HEK293 (cell line): ENCODE measurements at regions of chr12 and their contacts with region 1.

Region 1: GRCh38 chr12:102811110-102811737 is 105.8 kb downstream of the PAH start:
- H3K4me3 ChIP-seq: no peak overlapping the region
- H3K27ac ChIP-seq: no peak overlapping the region
- H3K4me1 ChIP-seq: no peaks in the 10 kb centered on the region
- CTCF ChIP-seq: no peak

Region 2: GRCh38 chr12:101939856-101940265 is 871.4 kb before region 1 on chr12:
- CTCF ChIA-PET with region 1: interaction called, 12 read pairs
- POLR2A ChIA-PET with region 1: no interaction called
- H3K4me3 ChIP-seq: no peak overlapping the region
- H3K27ac ChIP-seq: no peak overlapping the region
- H3K4me1 ChIP-seq: peaks cover 2% of the 10 kb centered on the region
- CTCF ChIP-seq: peak; percentile 72

Region 3: GRCh38 chr12:102722147-102722546 is 89.1 kb before region 1 on chr12:
- CTCF ChIA-PET with region 1: no interaction called
- POLR2A ChIA-PET with region 1: no interaction called
- H3K4me3 ChIP-seq: no peak overlapping the region
- H3K27ac ChIP-seq: no peak overlapping the region
- H3K4me1 ChIP-seq: no peaks in the 10 kb centered on the region
- CTCF ChIP-seq: no peak

Region 4: DNA sequence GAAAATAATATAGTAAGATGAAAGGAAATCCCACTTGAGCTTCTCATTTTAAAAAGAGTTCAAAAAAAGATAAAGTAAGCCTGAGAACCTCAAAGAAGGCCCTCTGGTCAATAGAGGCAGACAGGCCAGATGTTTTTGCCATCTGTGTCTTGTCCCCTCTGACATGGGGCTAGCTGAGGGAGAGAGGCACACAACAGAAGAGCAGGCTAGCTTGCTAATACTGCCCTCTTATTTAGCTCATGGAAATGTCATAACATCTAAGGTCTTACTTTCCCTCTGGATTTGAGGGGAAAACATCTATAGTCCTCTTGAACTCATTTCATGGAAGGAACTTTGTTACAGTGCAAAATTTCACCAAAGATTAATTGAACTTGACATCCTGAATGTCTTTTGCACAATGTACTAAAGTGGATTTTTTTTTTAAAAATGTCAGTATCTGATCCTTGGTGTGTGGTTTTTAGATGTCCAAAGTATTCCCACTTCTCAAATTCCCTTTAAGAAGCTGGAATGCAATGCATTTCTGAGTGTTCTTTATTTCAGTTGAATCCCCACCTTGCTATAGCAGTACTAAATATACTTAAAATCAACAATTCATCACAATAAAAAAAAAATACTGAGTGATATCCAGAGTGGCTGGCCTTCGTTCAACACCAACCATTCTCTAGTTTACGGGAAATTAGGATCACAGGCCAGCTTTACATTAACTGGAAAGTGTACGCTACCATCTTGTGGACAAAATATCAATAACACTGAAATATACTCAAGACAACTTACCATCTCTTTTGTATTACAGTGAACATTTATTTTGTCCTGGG is 70.9 kb before region 1 on chr12:
- CTCF ChIA-PET with region 1: interaction called, 17 read pairs
- POLR2A ChIA-PET with region 1: no interaction called
- H3K4me3 ChIP-seq: no peak overlapping the region
- H3K27ac ChIP-seq: no peak overlapping the region
- H3K4me1 ChIP-seq: no peaks in the 10 kb centered on the region
- CTCF ChIP-seq: no peak

Region 5: GRCh38 chr12:102797528-102797927 is 13.7 kb before region 1 on chr12:
- CTCF ChIA-PET with region 1: interaction called, 11 read pairs
- POLR2A ChIA-PET with region 1: no interaction called
- H3K4me3 ChIP-seq: no peak overlapping the region
- H3K27ac ChIP-seq: no peak overlapping the region
- H3K4me1 ChIP-seq: no peaks in the 10 kb centered on the region
- CTCF ChIP-seq: no peak